ENCODE measurements at regions of chr3 and their contacts with region 1.

Region 1: DNA sequence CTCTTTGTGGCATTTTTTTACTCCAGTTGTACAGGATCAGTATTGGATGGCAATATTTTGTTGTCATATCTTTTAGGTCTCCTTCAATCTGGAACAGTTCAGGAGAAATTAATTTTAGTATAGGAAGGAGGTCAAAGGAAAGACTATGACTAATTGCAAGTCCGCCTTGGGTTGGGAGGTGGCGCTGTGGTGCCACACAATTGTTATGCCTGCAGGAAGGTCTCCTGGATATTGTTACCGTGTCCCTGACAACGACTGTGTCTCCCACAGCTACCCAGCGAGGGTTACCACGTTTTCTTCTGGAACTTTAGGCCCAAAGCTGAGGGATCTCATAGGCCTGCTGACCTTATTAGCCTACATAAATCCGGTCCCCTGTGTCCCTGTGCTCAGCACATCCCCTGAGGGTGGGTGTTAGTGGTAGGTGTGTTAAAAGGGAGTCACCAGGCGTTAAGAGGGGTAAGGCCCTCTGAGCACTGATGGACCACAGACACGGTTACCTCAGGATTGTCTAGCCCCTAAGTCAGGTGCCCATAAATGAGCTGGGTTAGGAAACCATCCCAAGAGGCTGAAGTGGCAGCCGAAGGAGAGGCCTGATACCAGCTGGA is 31.5 kb downstream of the KCNAB1 start:
- DNase-seq: peak; percentile 63 to 83
- H3K4me3 ChIP-seq: no peak overlapping the region
- H3K27ac ChIP-seq: no peak overlapping the region
- H3K4me1 ChIP-seq: no peaks in the 10 kb centered on the region
- H3K27me3 ChIP-seq: no peaks in the 10 kb centered on the region
- CTCF ChIP-seq: peak; percentile 90 to 93 (median 91)
- EP300 ChIP-seq: no peak
- POLR2A ChIP-seq: no peak
- RAD21 ChIP-seq: peak; percentile 95 to 97

Region 2: DNA sequence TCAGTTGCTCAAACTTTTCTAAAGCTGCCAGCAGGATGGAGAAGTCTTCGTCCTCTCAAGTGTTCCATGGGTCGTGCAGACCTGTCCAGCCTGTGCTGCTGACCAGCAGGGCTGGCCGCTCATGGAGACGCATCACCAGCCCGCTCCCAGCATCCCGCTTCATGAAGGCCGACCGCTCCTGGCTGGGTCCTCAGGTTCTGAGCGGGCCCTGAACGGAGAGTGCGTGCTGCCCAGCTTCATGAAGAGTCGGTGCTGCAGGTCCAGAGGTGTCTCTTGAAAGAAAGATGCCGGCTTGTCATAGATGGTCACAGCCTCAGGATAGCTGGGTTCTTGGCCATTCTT is 107.3 kb before region 1 on chr3:
- CTCF ChIA-PET with region 1: interaction called, 11 read pairs
- POLR2A ChIA-PET with region 1: no interaction called
- DNase-seq: no peak
- H3K4me3 ChIP-seq: no peak overlapping the region
- H3K27ac ChIP-seq: no peak overlapping the region
- H3K4me1 ChIP-seq: no peaks in the 10 kb centered on the region
- H3K27me3 ChIP-seq: no peaks in the 10 kb centered on the region
- CTCF ChIP-seq: no peak
- EP300 ChIP-seq: no peak
- POLR2A ChIP-seq: no peak
- RAD21 ChIP-seq: no peak

Region 3: GRCh38 chr3:156109989-156110388 is 41.9 kb before region 1 on chr3:
- CTCF ChIA-PET with region 1: no interaction called
- POLR2A ChIA-PET with region 1: no interaction called
- DNase-seq: no peak
- H3K4me3 ChIP-seq: no peak overlapping the region
- H3K27ac ChIP-seq: no peak overlapping the region
- H3K4me1 ChIP-seq: no peaks in the 10 kb centered on the region
- H3K27me3 ChIP-seq: no peaks in the 10 kb centered on the region
- CTCF ChIP-seq: no peak
- EP300 ChIP-seq: no peak
- POLR2A ChIP-seq: no peak
- RAD21 ChIP-seq: no peak

Region 4: GRCh38 chr3:156174229-156174847 is 22.4 kb after region 1 on chr3:
- CTCF ChIA-PET with region 1: interaction called, 38 read pairs
- POLR2A ChIA-PET with region 1: no interaction called
- DNase-seq: no peak
- H3K4me3 ChIP-seq: no peak overlapping the region
- H3K27ac ChIP-seq: no peak overlapping the region
- H3K4me1 ChIP-seq: no peaks in the 10 kb centered on the region
- H3K27me3 ChIP-seq: no peaks in the 10 kb centered on the region
- CTCF ChIP-seq: peak in 2 of 3 experiments; percentile 43 to 62; a peak in 3 of 4 replicates
- EP300 ChIP-seq: no peak
- POLR2A ChIP-seq: no peak
- RAD21 ChIP-seq: peak; percentile 80 to 84

Region 5: DNA sequence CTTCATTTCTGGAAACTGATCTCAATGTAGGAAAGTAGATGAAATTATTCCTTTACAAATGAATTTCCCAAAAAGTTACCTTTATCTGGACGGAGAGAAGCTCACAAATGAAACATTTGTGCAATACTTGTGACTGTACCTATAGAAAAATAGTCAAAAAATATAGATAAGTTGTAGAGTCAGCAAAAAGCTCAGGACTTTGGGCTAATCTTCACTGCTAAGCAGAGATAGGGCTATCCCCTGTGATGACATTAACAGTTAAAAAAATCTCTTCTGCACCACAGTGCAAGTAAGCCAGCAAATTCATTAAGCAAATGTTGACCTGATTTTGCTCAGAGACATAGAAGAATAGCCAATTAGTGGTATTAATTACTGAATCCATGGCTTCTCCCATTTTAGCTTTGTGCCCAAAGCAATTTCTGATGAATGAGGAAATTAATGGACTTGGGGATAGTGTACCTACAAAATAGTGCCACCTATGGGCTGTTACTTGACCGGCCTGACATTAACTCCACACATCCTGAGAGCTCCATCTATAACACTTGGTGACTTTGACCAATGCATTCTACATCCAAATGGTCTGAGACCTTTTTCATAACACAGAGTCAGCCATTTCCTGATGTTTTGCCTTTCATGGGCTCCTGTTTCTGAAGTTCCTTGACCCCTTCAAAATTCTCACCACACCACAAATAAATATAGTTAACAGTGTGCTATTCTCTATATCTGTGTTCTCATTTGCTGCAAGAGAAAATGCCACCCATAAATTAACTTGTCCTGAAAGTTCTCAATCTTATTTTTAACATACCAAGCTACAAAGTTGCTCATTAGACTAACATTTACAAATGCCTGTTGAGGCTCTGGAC is 298.0 kb after region 1 on chr3:
- CTCF ChIA-PET with region 1: interaction called, 48 read pairs
- POLR2A ChIA-PET with region 1: no interaction called
- DNase-seq: no peak
- H3K4me3 ChIP-seq: no peak overlapping the region
- H3K27ac ChIP-seq: no peak overlapping the region
- H3K4me1 ChIP-seq: no peaks in the 10 kb centered on the region
- H3K27me3 ChIP-seq: no peaks in the 10 kb centered on the region
- CTCF ChIP-seq: peak in 2 of 3 experiments; percentile 62 to 75; a peak in 3 of 4 replicates
- EP300 ChIP-seq: no peak
- POLR2A ChIP-seq: no peak
- RAD21 ChIP-seq: peak; percentile 47 to 60

Region 6: GRCh38 chr3:156509189-156510174 is 357.6 kb after region 1 on chr3:
- CTCF ChIA-PET with region 1: interaction called, 87 read pairs
- POLR2A ChIA-PET with region 1: interaction called, 3 read pairs
- DNase-seq: no peak
- H3K4me3 ChIP-seq: no peak overlapping the region
- H3K27ac ChIP-seq: no peak overlapping the region
- H3K4me1 ChIP-seq: no peaks in the 10 kb centered on the region
- H3K27me3 ChIP-seq: no peaks in the 10 kb centered on the region
- CTCF ChIP-seq: peak in 2 of 3 experiments; percentile 24 to 48; a peak in 2 of 4 replicates
- EP300 ChIP-seq: no peak
- POLR2A ChIP-seq: no peak
- RAD21 ChIP-seq: peak; percentile 70 to 76

Region 7: DNA sequence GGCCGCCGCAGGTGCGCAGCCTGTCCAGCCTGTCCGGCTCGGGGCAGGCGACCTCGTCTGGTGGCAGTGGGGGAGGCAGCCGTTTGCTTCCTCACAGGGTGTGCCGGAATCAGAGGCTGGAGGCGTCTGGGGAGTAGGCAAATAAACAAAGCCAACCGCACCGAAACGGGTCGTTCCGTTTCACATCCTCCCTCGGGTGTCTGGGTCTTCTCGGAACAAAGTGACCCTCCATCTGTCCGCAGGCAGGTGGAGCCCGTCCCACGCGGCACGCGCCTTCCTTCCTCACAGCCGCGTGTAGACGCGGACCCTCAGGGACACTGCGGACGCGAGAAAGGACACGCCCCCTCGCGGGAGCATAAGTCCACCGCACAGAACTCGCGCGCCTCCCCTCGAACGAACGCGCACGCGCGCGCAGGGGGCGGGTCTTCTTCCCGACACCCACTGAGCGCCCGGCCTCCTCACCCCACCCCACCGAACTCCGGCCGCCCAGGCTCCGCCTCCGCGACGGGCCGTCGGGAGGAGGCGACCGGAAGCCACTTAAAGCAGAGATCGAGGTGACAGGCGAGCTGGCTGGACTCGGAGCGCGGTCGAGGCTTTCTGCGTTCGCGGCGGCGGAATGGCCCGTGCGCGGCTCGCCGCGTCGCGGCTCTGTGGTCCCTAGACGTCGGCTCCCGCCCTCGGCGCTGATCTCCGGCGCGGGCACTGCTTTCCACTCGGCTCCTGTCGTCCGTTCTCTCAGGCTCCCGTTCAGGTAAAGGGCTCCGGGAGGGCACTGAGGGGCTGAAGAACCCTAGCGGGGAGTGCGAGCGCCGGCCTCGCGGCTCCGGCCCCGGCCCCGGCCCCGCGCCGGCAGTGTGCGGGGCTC is 522.4 kb after region 1 on chr3 and contains the start of gene TIPARP:
- CTCF ChIA-PET with region 1: interaction called, 13 read pairs
- POLR2A ChIA-PET with region 1: no interaction called
- DNase-seq: peak; percentile 82 to 95
- H3K4me3 ChIP-seq: peak within 1 kb of the TSS; percentile 32 to 91 (median 78)
- H3K27ac ChIP-seq: peak within 1 kb of the TSS; percentile 47; the same call in 1 of the 2 replicates
- H3K4me1 ChIP-seq: no peaks in the 10 kb centered on the region; a peak in 1 of 7 replicates
- H3K27me3 ChIP-seq: no peaks in the 10 kb centered on the region; a peak in 1 of 7 replicates
- CTCF ChIP-seq: peak; percentile 75 to 89 (median 83)
- EP300 ChIP-seq: peak; percentile 1 to 38; a peak in 2 of 3 replicates
- POLR2A ChIP-seq: peak; percentile 73 to 88
- RAD21 ChIP-seq: peak; percentile 75 to 80
- total RNA-seq, gene TIPARP: 5.5 and 5.8 TPM in 2 replicates

Measured in H1 (cell line).